HEK293 (cell line): ENCODE measurements at regions of chr1 and their contacts with region 1.

Region 1: GRCh38 chr1:225474986-225475820 is 47.4 kb upstream of the LBR start:
- H3K4me3 ChIP-seq: no peak overlapping the region
- H3K27ac ChIP-seq: no peak overlapping the region; the same call in 1 of the 2 replicates
- H3K4me1 ChIP-seq: no peaks in the 10 kb centered on the region
- CTCF ChIP-seq: peak; percentile 100

Region 2: GRCh38 chr1:225460737-225461562 is 14.3 kb before region 1 on chr1:
- CTCF ChIA-PET with region 1: interaction called, 54 read pairs
- POLR2A ChIA-PET with region 1: interaction called, 3 read pairs
- H3K4me3 ChIP-seq: no peak overlapping the region
- H3K27ac ChIP-seq: no peak overlapping the region
- H3K4me1 ChIP-seq: peaks cover 28% of the 10 kb centered on the region
- CTCF ChIP-seq: no peak

Region 3: GRCh38 chr1:225544263-225544662 is 69.1 kb after region 1 on chr1:
- CTCF ChIA-PET with region 1: interaction called, 18 read pairs
- POLR2A ChIA-PET with region 1: no interaction called
- H3K4me3 ChIP-seq: no peak overlapping the region
- H3K27ac ChIP-seq: no peak overlapping the region
- H3K4me1 ChIP-seq: peaks cover 15% of the 10 kb centered on the region
- CTCF ChIP-seq: no peak

Region 4: GRCh38 chr1:225607355-225607754 is 132.2 kb after region 1 on chr1:
- CTCF ChIA-PET with region 1: no interaction called
- POLR2A ChIA-PET with region 1: no interaction called
- H3K4me3 ChIP-seq: no peak overlapping the region
- H3K27ac ChIP-seq: 0 out of 2 replicates have a peak overlapping the region, but pooled peaks have one; percentile 0
- H3K4me1 ChIP-seq: peaks cover 52% of the 10 kb centered on the region
- CTCF ChIP-seq: no peak

Region 5: DNA sequence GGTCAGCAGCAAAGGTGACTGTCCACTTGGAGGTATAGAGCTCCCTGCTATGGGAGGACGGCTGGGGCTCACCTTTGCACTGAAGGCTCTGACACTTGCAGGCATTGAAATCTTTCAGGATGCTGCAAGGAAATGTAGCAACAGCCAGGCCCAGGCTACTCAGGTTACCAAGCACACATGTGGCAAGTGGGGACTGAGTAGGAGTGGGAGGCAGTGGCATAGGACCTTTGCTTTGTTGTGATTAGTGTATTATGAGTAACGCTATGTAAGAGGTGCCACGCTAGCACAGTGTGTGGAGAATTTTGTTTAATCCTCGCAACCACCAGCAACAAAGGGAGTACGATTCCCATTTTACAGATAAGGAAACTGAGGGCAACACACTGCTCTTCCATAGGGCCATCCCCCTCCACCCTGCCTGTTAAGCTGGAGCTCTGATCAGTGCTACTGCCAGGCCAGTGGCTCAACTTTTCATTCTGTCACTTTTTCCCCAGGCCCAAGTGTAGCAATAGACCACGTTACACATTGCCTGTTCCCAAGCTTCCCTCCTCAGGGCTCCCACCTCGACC is 385.8 kb after region 1 on chr1:
- CTCF ChIA-PET with region 1: interaction called, 11 read pairs
- POLR2A ChIA-PET with region 1: no interaction called
- H3K4me3 ChIP-seq: no peak overlapping the region
- H3K27ac ChIP-seq: no peak overlapping the region
- H3K4me1 ChIP-seq: 0 out of 2 replicates have a peak, but pooled peaks cover 3% of the 10 kb centered on the region
- CTCF ChIP-seq: no peak

Region 6: GRCh38 chr1:225906370-225906866 is 431.2 kb after region 1 on chr1:
- CTCF ChIA-PET with region 1: interaction called, 84 read pairs
- POLR2A ChIA-PET with region 1: no interaction called
- H3K4me3 ChIP-seq: no peak overlapping the region
- H3K27ac ChIP-seq: no peak overlapping the region
- H3K4me1 ChIP-seq: no peaks in the 10 kb centered on the region
- CTCF ChIP-seq: no peak

Region 7: GRCh38 chr1:225962440-225962975 is 487.3 kb after region 1 on chr1:
- CTCF ChIA-PET with region 1: interaction called, 19 read pairs
- POLR2A ChIA-PET with region 1: no interaction called
- H3K4me3 ChIP-seq: no peak overlapping the region
- H3K27ac ChIP-seq: no peak overlapping the region
- H3K4me1 ChIP-seq: no peaks in the 10 kb centered on the region
- CTCF ChIP-seq: peak; percentile 84